ENCODE measurements at regions of chr1 and their contacts with region 1.

Region 1: GRCh38 chr1:207077470-207078377 is 10.9 kb upstream of the C4BPB start:
- DNase-seq: peak; percentile 38 to 86 (median 54)
- ATAC-seq: peak; percentile 100
- H3K4me3 ChIP-seq: no peak overlapping the region
- H3K4me3 Mint-ChIP-seq: no peak overlapping the region
- H3K27ac ChIP-seq: no peak overlapping the region
- H3K27ac Mint-ChIP-seq: no peak overlapping the region
- H3K4me1 ChIP-seq: no peaks in the 10 kb centered on the region
- H3K4me1 Mint-ChIP-seq: peaks cover 5% of the 10 kb centered on the region
- H3K27me3 ChIP-seq: no peaks in the 10 kb centered on the region
- H3K27me3 Mint-ChIP-seq: peaks cover 20% of the 10 kb centered on the region
- CTCF ChIP-seq: peak; percentile 88

Region 2: GRCh38 chr1:206635080-206635977 is 442.4 kb before region 1 on chr1 and contains the start of gene DYRK3:
- CTCF ChIA-PET with region 1: no interaction called
- POLR2A ChIA-PET with region 1: no interaction called
- intact Hi-C with region 1: loop called in 1 of 2 experiments (anchors 5 kb)
- DNase-seq: peak; percentile 74 to 95 (median 85)
- ATAC-seq: peak; percentile 93
- H3K4me3 ChIP-seq: peak within 1 kb of the TSS; percentile 64
- H3K4me3 Mint-ChIP-seq: peak within 1 kb of the TSS; percentile 92
- H3K27ac ChIP-seq: peak within 1 kb of the TSS in 1 of 2 donors; percentile 52
- H3K27ac Mint-ChIP-seq: peak within 1 kb of the TSS; percentile 66
- H3K4me1 ChIP-seq: peaks cover 20% of the 10 kb centered on the region
- H3K4me1 Mint-ChIP-seq: peaks cover 18% of the 10 kb centered on the region
- H3K27me3 ChIP-seq: peaks cover 0 to 14% of the 10 kb centered on the region in 2 experiments
- H3K27me3 Mint-ChIP-seq: no peaks in the 10 kb centered on the region
- CTCF ChIP-seq: no peak
- total RNA-seq, gene DYRK3: 1.6 to 1.7 TPM

Region 3: DNA sequence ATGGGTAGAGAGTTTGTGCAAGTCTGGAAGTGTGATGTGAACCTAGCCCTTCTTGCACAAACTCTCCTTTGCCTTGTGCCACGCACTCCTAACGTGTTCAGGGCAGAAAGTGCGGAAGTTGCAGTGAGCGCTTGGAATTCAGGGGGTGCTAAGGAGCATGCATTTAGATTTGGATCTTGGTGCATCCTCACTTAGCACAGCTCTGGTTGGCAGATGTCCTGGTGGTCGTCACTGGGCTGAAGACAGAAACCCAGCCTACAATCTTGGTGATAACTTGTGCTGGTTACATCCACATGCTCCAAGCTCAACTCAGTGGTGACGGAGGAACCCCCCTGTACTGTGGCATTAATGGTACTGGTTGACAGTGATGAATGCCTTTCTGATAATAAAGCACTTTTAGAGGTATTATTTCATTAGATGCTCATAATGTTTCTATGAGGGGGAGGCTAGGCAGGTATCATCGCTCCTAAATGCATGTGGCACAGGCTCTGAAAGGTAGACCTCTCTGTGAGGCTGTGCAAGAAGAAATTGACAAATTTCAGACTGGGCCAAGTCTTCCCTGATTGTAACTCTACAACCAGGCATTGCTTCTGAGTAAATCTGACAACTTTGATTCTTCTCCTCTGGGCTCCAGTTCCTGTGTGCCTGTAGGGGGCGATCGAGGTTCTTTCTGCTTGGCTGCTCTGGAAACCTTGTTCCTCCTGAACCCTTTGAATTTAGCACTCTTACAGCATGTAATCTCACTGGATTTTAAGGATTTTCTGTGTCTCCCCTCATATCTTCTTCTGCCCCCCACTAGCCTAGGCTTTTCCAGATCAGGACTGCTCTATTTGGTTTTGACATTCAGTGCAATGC is 352.4 kb before region 1 on chr1:
- CTCF ChIA-PET with region 1: no interaction called
- POLR2A ChIA-PET with region 1: no interaction called
- intact Hi-C with region 1: loop called in 1 of 2 experiments (anchors 5 kb)
- DNase-seq: peak; percentile 40 to 82 (median 55)
- ATAC-seq: peak; percentile 54
- H3K4me3 ChIP-seq: no peak overlapping the region
- H3K4me3 Mint-ChIP-seq: no peak overlapping the region
- H3K27ac ChIP-seq: no peak overlapping the region
- H3K27ac Mint-ChIP-seq: peak overlapping the region; percentile 62
- H3K4me1 ChIP-seq: peaks cover 51% of the 10 kb centered on the region
- H3K4me1 Mint-ChIP-seq: peaks cover 50% of the 10 kb centered on the region
- H3K27me3 ChIP-seq: no peaks in the 10 kb centered on the region
- H3K27me3 Mint-ChIP-seq: no peaks in the 10 kb centered on the region
- CTCF ChIP-seq: peak; percentile 47

Region 4: GRCh38 chr1:206935491-206936067 is 142.1 kb before region 1 on chr1:
- CTCF ChIA-PET with region 1: no interaction called
- POLR2A ChIA-PET with region 1: no interaction called
- intact Hi-C with region 1: loop called in 1 of 2 experiments (anchors 10 kb)
- DNase-seq: peak in 8 of 14 experiments; percentile 20 to 71 (median 49)
- ATAC-seq: peak; percentile 55
- H3K4me3 ChIP-seq: no peak overlapping the region
- H3K4me3 Mint-ChIP-seq: no peak overlapping the region
- H3K27ac ChIP-seq: no peak overlapping the region
- H3K27ac Mint-ChIP-seq: no peak overlapping the region
- H3K4me1 ChIP-seq: peaks cover 24% of the 10 kb centered on the region
- H3K4me1 Mint-ChIP-seq: peaks cover 29% of the 10 kb centered on the region
- H3K27me3 ChIP-seq: no peaks in the 10 kb centered on the region
- H3K27me3 Mint-ChIP-seq: no peaks in the 10 kb centered on the region
- CTCF ChIP-seq: peak; percentile 60

Region 5: DNA sequence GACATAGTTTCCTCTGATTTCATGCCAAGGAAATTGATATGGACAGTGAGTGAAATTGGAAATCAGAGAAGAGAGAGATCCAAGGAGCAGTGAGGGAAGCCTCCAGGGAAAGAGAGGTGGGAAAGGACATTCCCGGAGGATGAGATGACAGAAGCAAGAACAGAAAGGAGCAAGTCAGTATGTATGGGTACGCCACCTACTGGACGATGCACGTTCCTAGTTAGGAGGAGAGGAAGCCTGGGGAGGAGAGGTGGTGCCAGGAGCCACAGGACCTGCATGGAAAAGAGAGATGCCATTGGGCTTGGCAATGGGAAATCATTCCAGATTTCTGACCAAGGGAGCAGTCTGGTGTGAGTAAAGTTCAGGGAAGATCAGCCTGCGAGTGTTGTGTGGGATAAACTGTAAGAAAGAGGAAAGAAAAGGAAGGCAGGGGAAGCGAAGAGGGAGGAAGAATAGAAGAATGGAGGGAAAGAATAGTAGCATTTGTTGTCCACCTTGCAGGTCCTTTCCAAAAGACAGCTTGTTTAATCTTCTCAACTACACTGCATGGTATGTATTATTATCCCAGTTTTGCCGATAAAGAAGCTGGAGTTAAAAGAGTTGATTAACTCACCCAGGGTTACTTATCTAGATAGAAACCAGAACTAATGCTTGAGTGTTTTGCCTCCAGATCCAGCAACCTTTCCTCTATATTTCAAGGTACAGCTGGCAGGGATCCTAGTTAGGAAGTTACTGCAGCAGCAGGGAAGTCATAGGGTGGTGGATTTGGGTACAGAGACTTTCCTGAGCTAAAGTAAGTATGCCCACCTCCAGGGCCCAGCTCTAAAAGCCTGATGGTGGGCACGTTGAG is 72.5 kb before region 1 on chr1:
- CTCF ChIA-PET with region 1: no interaction called
- POLR2A ChIA-PET with region 1: no interaction called
- intact Hi-C with region 1: loop called in 1 of 2 experiments (anchors 2 kb)
- DNase-seq: peak; percentile 7 to 63 (median 20)
- ATAC-seq: no peak
- H3K4me3 ChIP-seq: no peak overlapping the region
- H3K4me3 Mint-ChIP-seq: no peak overlapping the region
- H3K27ac ChIP-seq: no peak overlapping the region
- H3K27ac Mint-ChIP-seq: no peak overlapping the region
- H3K4me1 ChIP-seq: no peaks in the 10 kb centered on the region
- H3K4me1 Mint-ChIP-seq: no peaks in the 10 kb centered on the region
- H3K27me3 ChIP-seq: no peaks in the 10 kb centered on the region
- H3K27me3 Mint-ChIP-seq: peaks cover 3% of the 10 kb centered on the region
- CTCF ChIP-seq: peak; percentile 76

Region 6: DNA sequence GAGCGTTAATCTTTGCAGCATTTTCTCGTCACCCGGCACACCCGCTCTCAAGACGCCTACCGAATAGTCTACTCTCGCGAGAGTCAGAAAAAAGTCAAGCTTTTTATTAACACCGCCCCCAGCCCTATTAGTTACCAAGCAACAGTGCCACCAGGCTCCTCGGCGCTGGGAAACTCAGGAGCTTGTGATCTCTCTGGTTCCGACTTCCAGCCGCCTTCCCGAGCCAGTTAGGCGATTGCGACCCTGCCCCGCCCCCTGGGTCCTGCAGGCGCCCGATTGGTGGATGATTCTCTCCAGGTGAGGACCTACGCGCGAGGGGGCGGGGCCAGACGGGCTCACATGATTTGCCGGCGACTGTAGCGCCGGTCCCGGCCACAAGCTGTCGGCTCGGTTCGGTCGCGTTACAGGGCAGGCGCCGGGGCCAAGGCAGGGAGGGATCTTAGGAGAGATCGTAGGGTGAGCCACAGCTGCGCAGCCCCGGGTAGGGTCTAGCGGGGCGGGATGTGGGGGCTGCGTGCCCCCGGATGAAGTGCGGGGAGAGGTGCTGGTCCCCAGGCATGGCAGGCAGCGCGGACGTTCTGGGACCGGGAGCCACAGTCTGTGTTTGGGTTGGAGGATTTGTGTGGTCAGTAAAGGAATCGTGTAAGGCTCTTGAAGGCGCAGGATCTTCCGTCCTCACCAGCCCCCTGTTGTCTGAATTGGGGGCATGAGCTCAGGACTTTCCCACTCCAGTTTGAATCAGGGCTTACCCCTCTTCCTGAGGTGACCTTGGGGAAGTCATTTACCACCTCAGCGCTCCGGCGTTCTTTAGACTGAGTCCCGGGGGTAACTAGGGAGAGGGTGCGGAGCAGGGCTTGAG is 24.6 kb before region 1 on chr1 and contains the start of gene PFKFB2:
- CTCF ChIA-PET with region 1: interaction called, 13 read pairs
- POLR2A ChIA-PET with region 1: interaction called, 3 read pairs
- intact Hi-C with region 1: loop called (anchors 1 kb)
- DNase-seq: peak; percentile 85 to 97 (median 94)
- ATAC-seq: peak; percentile 87
- H3K4me3 ChIP-seq: peak within 1 kb of the TSS; percentile 66
- H3K4me3 Mint-ChIP-seq: peak within 1 kb of the TSS; percentile 98
- H3K27ac ChIP-seq: peak within 1 kb of the TSS; percentile 24 to 50
- H3K27ac Mint-ChIP-seq: peak within 1 kb of the TSS; percentile 93
- H3K4me1 ChIP-seq: peaks cover 29% of the 10 kb centered on the region
- H3K4me1 Mint-ChIP-seq: peaks cover 56% of the 10 kb centered on the region
- H3K27me3 ChIP-seq: no peaks in the 10 kb centered on the region
- H3K27me3 Mint-ChIP-seq: no peaks in the 10 kb centered on the region
- CTCF ChIP-seq: no peak
- total RNA-seq, gene PFKFB2: 3.2 to 4.0 TPM

Measured in CD4-positive, alpha-beta T cell (primary cell).